ENCODE measurements at regions of chr1 and their contacts with region 1.

Region 1: GRCh38 chr1:151144474-151145303 is 1.7 kb downstream of the SEMA6C start:
- DNase-seq: no peak
- H3K4me3 ChIP-seq: peak overlapping the region; percentile 70
- CTCF ChIP-seq: no peak

Region 2: DNA sequence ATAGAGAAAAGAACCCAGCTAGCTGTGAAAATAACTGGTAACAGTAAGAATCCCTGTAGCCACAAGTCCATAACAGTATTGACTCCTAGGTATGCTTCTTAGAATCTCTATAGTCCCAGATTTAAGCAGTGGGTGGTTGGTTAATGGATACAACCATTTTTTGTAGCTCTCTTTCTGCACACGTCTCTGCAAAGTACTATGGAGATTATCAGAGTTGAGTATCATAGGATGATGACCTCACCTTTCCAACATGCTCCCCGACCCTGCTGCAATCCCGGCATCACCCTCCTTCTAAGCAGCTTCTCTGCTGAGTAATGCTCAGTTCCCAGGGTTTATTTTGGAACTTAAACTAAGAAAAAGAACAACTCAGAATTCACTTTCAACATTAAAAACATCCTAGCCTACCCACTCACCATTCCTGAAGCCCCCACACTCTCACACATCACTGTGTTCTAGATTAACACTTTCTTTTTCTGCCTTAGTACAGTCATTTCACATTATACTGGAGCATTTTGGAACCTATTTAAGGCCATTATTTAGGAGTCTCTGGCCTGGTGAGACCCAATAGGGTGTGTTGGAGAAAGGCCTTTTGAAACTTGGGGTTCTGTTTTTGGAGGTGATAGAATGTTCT is 81.8 kb before region 1 on chr1:
- in situ Hi-C with region 1: no loop called
- DNase-seq: no peak
- H3K4me3 ChIP-seq: no peak overlapping the region
- CTCF ChIP-seq: no peak

Region 3: GRCh38 chr1:151098126-151098525 is 46.6 kb before region 1 on chr1:
- in situ Hi-C with region 1: loop called (anchors 5 kb)
- DNase-seq: no peak
- H3K4me3 ChIP-seq: no peak overlapping the region
- CTCF ChIP-seq: no peak

Measured in astrocyte of the cerebellum (primary cell).